PC-9 (cell line): ENCODE measurements at regions of chr4 and their contacts with region 1.

Region 1: GRCh38 chr4:7081891-7082471 is 14.1 kb upstream of the GRPEL1 start:
- DNase-seq: peak; percentile 62 to 73
- H3K4me3 ChIP-seq: no peak overlapping the region
- H3K27ac ChIP-seq: no peak overlapping the region
- H3K4me1 ChIP-seq: no peaks in the 10 kb centered on the region
- H3K27me3 ChIP-seq: no peaks in the 10 kb centered on the region
- CTCF ChIP-seq: peak; percentile 66

Region 2: DNA sequence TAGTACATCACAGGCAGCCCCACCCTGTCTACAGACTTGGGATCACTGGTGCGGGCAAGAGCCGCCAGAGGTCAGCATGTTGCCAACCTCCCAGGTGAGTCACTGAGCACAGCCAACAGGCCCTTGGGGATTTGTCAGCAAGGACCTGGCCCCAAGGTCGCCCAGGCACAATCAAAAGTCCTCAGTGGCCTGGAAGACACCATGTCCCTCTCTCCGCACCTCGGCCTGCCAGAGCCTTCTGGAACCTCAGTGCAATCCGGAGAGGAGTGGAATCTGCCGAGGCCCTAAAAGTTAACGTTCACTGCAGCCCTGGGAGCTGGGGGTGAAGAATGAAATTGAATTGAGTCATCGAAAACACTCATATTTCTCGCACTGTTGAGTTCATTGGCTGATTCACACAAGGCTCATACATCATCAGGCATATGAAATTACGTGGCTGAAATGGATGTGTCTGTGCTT is 738.0 kb before region 1 on chr4:
- CTCF ChIA-PET with region 1: no interaction called
- POLR2A ChIA-PET with region 1: no interaction called
- intact Hi-C with region 1: loop called (anchors 5 kb)
- DNase-seq: peak; percentile 74 to 84
- H3K4me3 ChIP-seq: peak overlapping the region; percentile 15; the same call in 1 of the 2 replicates
- H3K27ac ChIP-seq: peak overlapping the region; percentile 46
- H3K4me1 ChIP-seq: peaks cover 18% of the 10 kb centered on the region
- H3K27me3 ChIP-seq: no peaks in the 10 kb centered on the region
- CTCF ChIP-seq: no peak; the same call in 1 of the 2 replicates

Region 3: GRCh38 chr4:6873792-6874461 is 208.1 kb before region 1 on chr4:
- CTCF ChIA-PET with region 1: no interaction called
- POLR2A ChIA-PET with region 1: interaction called, 23 read pairs
- intact Hi-C with region 1: no loop called
- DNase-seq: peak in 1 of 2 experiments; percentile 58
- H3K4me3 ChIP-seq: no peak overlapping the region
- H3K27ac ChIP-seq: no peak overlapping the region
- H3K4me1 ChIP-seq: no peaks in the 10 kb centered on the region
- H3K27me3 ChIP-seq: no peaks in the 10 kb centered on the region
- CTCF ChIP-seq: peak; percentile 79

Region 4: GRCh38 chr4:6885951-6886557 is 195.9 kb before region 1 on chr4:
- CTCF ChIA-PET with region 1: no interaction called
- POLR2A ChIA-PET with region 1: no interaction called
- intact Hi-C with region 1: no loop called
- DNase-seq: no peak
- H3K4me3 ChIP-seq: no peak overlapping the region
- H3K27ac ChIP-seq: no peak overlapping the region
- H3K4me1 ChIP-seq: no peaks in the 10 kb centered on the region
- H3K27me3 ChIP-seq: no peaks in the 10 kb centered on the region
- CTCF ChIP-seq: no peak